Vagina (tissue), 2 donors: ENCODE measurements at regions of chr2 and their contacts with region 1.

Region 1: GRCh38 chr2:235330775-235331451 is 162.9 kb upstream of the AGAP1 start:
- DNase-seq: no peak
- H3K4me3 ChIP-seq: no peak overlapping the region
- H3K27ac ChIP-seq: no peak overlapping the region
- H3K4me1 ChIP-seq: no peaks in the 10 kb centered on the region
- H3K27me3 ChIP-seq: no peaks in the 10 kb centered on the region
- CTCF ChIP-seq: no peak
- POLR2A ChIP-seq: no peak

Region 2: DNA sequence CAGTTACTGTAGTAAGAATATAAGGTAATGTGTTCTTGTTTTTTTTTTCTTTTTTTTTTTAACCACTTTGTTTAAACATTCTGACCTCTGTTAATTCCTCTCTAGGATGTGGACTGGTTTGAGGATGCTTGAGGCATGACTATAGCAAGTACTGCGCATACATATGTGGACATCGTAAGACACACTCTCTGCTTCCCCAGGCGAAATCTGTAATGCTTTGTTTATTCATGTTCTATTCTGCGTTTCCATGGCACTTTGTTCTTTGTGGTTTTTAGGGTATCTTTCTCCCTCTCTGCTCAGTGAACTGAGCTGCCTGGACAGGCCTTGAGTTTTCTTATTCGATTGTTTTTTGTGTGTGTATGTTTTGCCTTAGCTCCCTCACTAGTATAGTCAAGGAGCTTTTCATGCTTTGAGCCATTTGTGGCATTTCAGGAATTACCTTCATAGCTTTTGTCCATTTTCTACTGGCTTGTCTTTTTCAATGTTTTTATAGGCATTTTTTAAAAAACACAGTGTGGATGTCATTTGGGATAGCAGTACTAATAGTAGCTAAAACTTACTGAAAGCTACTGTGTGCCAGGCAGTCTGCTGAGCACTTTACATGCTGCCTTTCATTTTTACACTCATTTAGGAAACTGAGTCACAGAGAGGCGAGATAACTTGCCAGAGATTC is 381.0 kb before region 1 on chr2:
- intact Hi-C with region 1: loop called (anchors 10 kb)
- DNase-seq: no peak
- H3K4me3 ChIP-seq: no peak overlapping the region
- H3K27ac ChIP-seq: no peak overlapping the region
- H3K4me1 ChIP-seq: peaks cover 31% of the 10 kb centered on the region
- H3K27me3 ChIP-seq: no peaks in the 10 kb centered on the region
- CTCF ChIP-seq: no peak
- POLR2A ChIP-seq: no peak

Region 3: GRCh38 chr2:235433860-235434259 is 102.9 kb after region 1 on chr2:
- intact Hi-C with region 1: no loop called
- DNase-seq: no peak
- H3K4me3 ChIP-seq: no peak overlapping the region
- H3K27ac ChIP-seq: peak overlapping the region; percentile 24
- H3K4me1 ChIP-seq: peaks cover 8% of the 10 kb centered on the region
- H3K27me3 ChIP-seq: no peaks in the 10 kb centered on the region
- CTCF ChIP-seq: peak in 1 of 3 experiments; percentile 24
- POLR2A ChIP-seq: no peak

Region 4: DNA sequence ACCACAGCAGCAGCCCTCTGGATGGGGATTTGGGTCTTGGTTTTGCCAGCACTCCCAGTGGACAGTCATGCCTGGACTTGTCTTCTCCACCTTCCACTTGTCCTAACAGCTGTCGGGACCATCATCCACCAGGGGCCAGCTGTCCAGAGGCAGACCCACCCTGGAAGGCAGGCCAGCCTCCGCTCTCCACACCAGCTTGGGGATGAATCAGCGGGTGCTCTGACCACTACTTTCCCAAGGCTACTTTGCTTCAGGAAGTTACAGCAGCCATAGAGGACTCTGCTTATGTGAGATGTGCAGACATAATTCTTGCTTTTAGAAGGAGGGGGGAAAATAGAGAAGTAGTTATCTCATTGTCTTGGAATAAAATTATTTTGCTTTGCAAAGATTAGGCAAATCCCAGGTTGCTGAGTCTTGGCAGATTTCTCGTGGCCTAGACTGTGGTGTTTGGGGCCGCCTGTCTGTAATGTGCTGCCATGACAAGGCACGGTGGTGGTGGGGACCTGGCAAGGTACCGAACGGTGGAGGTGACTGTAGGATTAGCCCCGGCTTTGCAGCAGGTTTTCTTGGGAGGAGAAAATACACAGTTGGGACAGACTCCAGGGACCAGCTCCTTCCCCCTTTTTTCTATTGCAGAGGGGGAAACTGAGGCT is 311.7 kb after region 1 on chr2:
- intact Hi-C with region 1: no loop called
- DNase-seq: no peak
- H3K4me3 ChIP-seq: no peak overlapping the region
- H3K27ac ChIP-seq: no peak overlapping the region
- H3K4me1 ChIP-seq: peaks cover 46% of the 10 kb centered on the region
- H3K27me3 ChIP-seq: no peaks in the 10 kb centered on the region
- CTCF ChIP-seq: no peak
- POLR2A ChIP-seq: no peak

Region 5: DNA sequence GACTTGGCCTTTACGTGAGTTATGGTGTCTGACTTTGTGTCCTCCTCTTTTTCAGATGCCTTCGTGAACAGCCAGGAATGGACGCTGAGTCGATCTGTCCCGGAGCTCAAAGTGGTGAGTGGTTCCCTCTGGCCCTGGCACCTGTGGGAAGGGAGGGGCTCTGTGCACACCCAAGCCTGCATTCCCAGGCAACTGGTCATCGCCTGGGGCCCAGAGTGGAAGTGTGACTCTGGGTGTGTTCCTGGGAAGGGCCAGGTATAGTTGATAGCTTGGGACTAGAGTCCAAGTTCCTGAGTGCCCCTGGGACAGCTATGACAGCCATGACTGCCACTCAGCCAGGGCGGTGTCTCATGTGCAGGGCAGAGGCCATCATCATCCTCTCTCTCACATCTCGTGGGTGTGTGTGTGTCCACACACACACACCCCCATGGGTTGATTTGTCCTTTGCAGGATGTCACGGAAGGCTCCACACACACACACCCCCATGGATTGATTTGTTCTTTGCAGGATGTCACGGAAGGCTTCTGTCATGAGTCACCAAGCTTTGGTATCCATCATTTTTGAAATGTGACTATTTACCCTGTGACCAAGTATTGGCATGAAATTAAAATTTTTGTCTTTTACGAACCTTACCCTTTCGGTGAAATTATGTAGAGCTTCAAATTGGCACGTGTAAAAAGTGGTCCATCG is 378.4 kb after region 1 on chr2:
- intact Hi-C with region 1: no loop called
- DNase-seq: no peak
- H3K4me3 ChIP-seq: no peak overlapping the region
- H3K27ac ChIP-seq: no peak overlapping the region
- H3K4me1 ChIP-seq: no peaks in the 10 kb centered on the region
- H3K27me3 ChIP-seq: no peaks in the 10 kb centered on the region
- CTCF ChIP-seq: no peak
- POLR2A ChIP-seq: no peak